Adrenal gland (tissue), 19 donors: ENCODE measurements at regions of chr1 and their contacts with region 1.

Region 1: DNA sequence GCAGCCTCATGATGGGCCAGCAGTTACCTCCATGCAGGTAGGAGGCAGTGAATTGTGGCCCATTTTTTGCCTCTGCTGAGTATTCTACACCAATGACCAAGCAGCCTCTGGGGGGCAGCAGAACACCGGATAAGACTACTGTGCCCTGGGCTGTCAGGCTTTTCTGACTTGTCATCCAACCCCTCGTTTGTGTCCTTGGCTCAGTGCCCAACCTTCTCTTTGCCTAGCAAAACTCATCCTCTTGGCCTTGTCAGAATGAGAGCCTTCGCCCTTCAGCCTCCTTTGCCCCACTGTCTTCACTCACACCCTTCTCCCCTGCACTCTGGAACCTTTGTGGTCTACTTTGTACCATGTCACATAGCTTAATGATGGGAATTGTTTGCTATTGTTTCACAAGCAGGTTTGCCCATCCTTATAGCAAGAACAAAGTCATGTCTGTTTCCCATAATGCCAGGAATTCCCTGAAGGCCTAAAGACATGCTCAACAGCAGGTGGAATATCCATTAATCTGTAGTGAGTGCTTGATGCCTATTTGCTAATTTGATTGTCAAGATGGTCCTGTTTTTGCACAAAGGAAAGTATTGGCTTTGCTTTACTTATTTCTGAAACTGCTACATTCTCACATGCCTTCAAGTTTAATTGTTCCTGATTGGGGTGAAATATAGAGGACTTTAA is 255.9 kb downstream of the HHAT start:
- DNase-seq: peak; percentile 70 to 95 (median 83)
- H3K4me3 ChIP-seq: no peak overlapping the region
- H3K27ac ChIP-seq: no peak overlapping the region
- H3K4me1 ChIP-seq: no peaks in the 10 kb centered on the region
- H3K27me3 ChIP-seq: no peaks in the 10 kb centered on the region
- CTCF ChIP-seq: peak; percentile 25 to 73 (median 64)
- POLR2A ChIP-seq: no peak

Region 2: DNA sequence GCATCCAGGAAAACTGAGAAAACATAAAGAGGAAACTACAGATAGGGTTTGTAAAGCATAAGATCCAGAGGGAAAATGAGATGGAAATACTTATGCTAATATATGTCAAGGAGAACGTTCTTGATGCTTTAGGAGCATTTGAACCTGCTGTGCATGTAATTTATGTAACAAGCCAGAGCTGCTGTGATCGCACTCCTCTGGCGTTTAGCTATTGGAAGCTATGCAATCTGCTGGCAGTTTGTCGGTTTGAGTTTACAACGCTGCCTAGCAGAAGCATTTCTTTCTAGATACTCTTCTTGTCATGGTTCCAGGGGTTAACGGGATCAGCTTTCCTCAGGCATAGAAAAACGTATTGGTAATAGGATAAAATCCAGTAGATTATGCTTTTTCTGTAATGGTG is 366.7 kb after region 1 on chr1:
- intact Hi-C with region 1: loop called in 1 of 2 experiments (anchors 10 kb)
- DNase-seq: no peak
- H3K4me3 ChIP-seq: no peak overlapping the region
- H3K27ac ChIP-seq: no peak overlapping the region
- H3K4me1 ChIP-seq: no peaks in the 10 kb centered on the region
- H3K27me3 ChIP-seq: no peaks in the 10 kb centered on the region
- CTCF ChIP-seq: no peak
- POLR2A ChIP-seq: no peak

Region 3: GRCh38 chr1:211133836-211134669 is 549.5 kb after region 1 on chr1 and contains the start of gene KCNH1:
- intact Hi-C with region 1: loop called (anchors 5 to 10 kb)
- DNase-seq: peak; percentile 45 to 91 (median 73)
- H3K4me3 ChIP-seq: peak within 1 kb of the TSS in 2 of 4 donors; percentile 30 to 52
- H3K27ac ChIP-seq: no peak within 1 kb of the TSS
- H3K4me1 ChIP-seq: peaks cover 9 to 15% of the 10 kb centered on the region in 2 donors
- H3K27me3 ChIP-seq: peaks cover 22% of the 10 kb centered on the region
- CTCF ChIP-seq: peak; percentile 25 to 96 (median 80)
- POLR2A ChIP-seq: no peak
- total RNA-seq, gene KCNH1: 0.15 to 2.2 (median 0.83) TPM in 5 of 9 donors, not detected in the others